ENCODE measurements at regions of chr7 and their contacts with region 1.

Region 1: GRCh38 chr7:138738551-138739335 is 37.6 kb upstream of the SVOPL start:
- DNase-seq: peak; percentile 4
- H3K4me3 ChIP-seq: no peak overlapping the region
- H3K27ac ChIP-seq: no peak overlapping the region
- H3K4me1 ChIP-seq: no peaks in the 10 kb centered on the region
- H3K27me3 ChIP-seq: no peaks in the 10 kb centered on the region
- CTCF ChIP-seq: peak; percentile 60 to 91 (median 86)
- POLR2A ChIP-seq: no peak

Region 2: DNA sequence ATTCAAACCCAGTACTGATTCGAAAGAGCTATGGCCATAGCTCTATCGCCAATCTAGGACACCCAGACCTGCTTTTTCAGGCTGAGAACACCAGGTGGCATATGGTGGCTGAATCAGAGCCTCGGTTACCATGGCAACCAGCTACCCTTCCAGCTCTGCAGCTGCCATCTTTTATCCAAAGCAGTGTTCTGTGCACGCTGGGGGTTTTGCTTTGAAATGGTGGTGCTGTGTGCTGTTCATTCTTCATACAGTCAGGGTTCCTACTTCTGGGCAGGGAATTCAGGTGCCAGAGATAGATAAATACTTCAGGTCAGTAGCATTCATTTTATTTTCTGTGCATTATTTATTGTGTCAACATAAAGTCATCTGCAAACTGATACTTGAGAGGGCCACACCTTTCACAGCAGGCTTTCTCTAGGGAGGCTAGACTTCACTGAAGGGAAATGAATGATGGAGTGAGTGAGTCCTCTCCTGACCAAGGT is 577.1 kb before region 1 on chr7:
- intact Hi-C with region 1: loop called (anchors 10 kb)
- DNase-seq: peak; percentile 2
- H3K4me3 ChIP-seq: no peak overlapping the region
- H3K27ac ChIP-seq: no peak overlapping the region
- H3K4me1 ChIP-seq: peaks cover 0 to 5% (median 0%) of the 10 kb centered on the region in 3 donors
- H3K27me3 ChIP-seq: no peaks in the 10 kb centered on the region
- CTCF ChIP-seq: peak in 5 of 6 experiments; percentile 37 to 83 (median 60)
- POLR2A ChIP-seq: no peak

Measured in esophagus squamous epithelium (tissue), 5 donors.